ENCODE measurements at regions of chr10 and their contacts with region 1.

Region 1: GRCh38 chr10:61628875-61629513 is 33.7 kb upstream of the CABCOCO1 start:
- DNase-seq: peak in 1 of 2 experiments; percentile 55
- H3K4me3 ChIP-seq: no peak overlapping the region
- H3K4me3 Mint-ChIP-seq: peak overlapping the region; percentile 8
- H3K27ac Mint-ChIP-seq: peak overlapping the region; percentile 78
- H3K4me1 ChIP-seq: peaks cover 17% of the 10 kb centered on the region
- H3K4me1 Mint-ChIP-seq: peaks cover 19% of the 10 kb centered on the region
- H3K27me3 ChIP-seq: no peaks in the 10 kb centered on the region
- H3K27me3 Mint-ChIP-seq: no peaks in the 10 kb centered on the region
- CTCF ChIP-seq: no peak

Region 2: DNA sequence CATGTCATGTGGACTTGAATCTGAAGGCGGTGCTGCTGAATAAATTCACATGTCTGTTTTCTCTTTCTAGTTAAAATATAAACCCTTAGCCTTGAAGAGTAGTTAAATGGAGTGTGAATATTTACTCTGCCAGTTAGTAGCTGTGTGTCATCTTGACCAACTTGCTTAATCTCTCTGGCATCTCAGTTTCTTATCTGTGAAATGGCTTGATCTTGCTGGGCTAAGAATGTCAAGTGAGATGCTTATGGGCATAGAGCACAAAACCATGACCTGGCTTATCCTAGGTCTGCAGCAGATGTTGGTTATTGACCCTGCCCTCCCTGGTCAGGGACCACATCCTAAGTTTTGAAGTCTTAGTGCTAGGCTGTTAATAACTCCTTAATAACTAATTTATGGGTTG is 289.1 kb after region 1 on chr10:
- CTCF ChIA-PET with region 1: no interaction called
- POLR2A ChIA-PET with region 1: no interaction called
- intact Hi-C with region 1: loop called (anchors 10 kb)
- DNase-seq: no peak
- H3K4me3 ChIP-seq: no peak overlapping the region
- H3K4me3 Mint-ChIP-seq: peak overlapping the region; percentile 7
- H3K27ac Mint-ChIP-seq: peak overlapping the region; percentile 57
- H3K4me1 ChIP-seq: peaks cover 64% of the 10 kb centered on the region
- H3K4me1 Mint-ChIP-seq: peaks cover 70% of the 10 kb centered on the region
- H3K27me3 ChIP-seq: no peaks in the 10 kb centered on the region
- H3K27me3 Mint-ChIP-seq: no peaks in the 10 kb centered on the region
- CTCF ChIP-seq: no peak